ENCODE measurements at regions of chr7 and their contacts with region 1.

Region 1: DNA sequence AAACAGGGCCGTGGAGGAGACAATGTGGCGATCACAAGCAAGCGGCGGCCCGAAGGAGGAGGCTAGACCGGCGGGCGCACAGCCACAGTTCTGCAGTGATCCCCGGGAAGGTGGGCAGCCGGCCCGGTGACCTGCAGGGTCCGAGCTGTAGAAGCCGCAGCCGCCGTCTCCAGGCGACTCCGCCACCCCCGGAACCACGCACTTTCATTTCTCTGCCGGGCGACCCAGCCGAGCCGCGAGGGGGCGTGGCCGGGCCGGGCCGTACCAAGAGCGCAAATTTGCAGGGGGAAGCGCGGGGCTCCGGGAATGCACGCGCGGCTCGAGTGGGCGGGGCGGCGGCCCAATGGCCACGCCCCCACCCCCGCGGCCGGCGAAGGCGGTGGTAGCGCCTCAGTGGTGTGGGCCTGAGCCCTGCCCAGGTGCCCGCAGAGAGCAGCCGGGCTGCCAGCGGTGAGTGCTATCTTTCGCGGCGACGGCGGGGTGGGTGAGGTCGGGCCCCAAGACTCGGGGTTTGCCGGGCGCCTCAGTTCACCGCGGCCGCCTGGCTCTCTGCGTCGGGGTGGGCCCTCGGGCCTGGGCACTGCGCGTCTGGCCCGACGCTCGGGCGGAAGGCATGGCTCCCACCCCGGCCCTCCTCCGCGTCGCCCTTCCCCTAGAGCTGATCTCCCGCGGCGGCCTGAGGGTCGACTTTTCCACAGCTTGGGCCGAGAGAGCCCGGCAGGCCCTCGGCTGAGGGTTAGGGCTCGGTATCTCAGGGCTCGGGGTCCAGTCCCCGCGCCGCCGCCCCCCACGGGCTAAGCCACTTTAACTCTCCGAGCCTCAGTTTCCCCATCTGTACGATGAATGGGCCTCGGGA is at the start of gene POR:
- DNase-seq: peak; percentile 95 to 99 (median 97)
- H3K4me3 ChIP-seq: peak within 1 kb of the TSS; percentile 87
- H3K27ac ChIP-seq: peak within 1 kb of the TSS; percentile 73 to 79
- H3K4me1 ChIP-seq: peaks cover 13% of the 10 kb centered on the region
- H3K27me3 ChIP-seq: no peaks in the 10 kb centered on the region
- CTCF ChIP-seq: peak in 1 of 3 donors; percentile 49
- EP300 ChIP-seq: no peak
- POLR2A ChIP-seq: peak; percentile 94
- total RNA-seq, gene POR: 91.2 to 191 (median 148) TPM

Region 2: GRCh38 chr7:75962607-75963380 is 47.8 kb after region 1 on chr7:
- intact Hi-C with region 1: loop called in 1 of 4 experiments (anchors 5 kb)
- DNase-seq: peak; percentile 64 to 82 (median 73)
- H3K4me3 ChIP-seq: no peak overlapping the region
- H3K27ac ChIP-seq: peak overlapping the region; percentile 43 to 59
- H3K4me1 ChIP-seq: peaks cover 38% of the 10 kb centered on the region
- H3K27me3 ChIP-seq: no peaks in the 10 kb centered on the region
- CTCF ChIP-seq: no peak
- EP300 ChIP-seq: no peak
- POLR2A ChIP-seq: no peak

Region 3: DNA sequence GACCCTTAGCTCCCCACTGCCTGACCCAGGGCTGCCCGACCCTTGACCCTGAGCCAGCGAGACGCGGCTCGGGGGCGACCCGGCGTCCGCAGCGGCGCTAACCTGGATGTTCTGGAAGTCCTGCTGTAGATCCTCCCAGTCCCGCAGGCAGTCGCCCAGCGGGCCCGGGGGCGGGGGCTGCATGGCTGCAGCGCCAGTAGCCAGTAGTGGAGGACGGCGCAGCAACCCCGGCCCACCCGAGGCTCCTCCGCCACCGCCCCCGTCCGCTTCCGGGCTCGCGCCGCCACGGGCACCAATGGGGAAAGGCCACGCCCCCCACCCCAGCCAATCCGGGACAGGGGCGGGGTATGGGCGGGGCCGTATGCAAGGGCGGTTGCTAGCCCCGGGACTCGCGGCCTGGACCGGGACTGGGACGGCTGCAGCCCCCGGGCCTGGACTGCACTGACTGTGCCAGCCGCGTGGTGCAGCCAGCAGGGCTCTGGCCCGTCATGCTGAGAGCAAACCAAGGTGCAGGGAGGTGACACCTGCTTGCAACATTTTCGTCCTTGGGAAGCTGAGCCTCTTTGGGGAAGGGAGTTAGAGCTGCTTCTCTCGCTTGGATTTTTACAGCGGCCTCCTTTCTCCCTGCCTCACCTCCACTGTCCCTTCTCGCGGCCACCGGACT is 79.6 kb after region 1 on chr7 and contains the start of gene TMEM120A:
- intact Hi-C with region 1: loop called in 1 of 4 experiments (anchors 2 kb)
- DNase-seq: peak; percentile 97 to 99 (median 97)
- H3K4me3 ChIP-seq: peak within 1 kb of the TSS; percentile 58
- H3K27ac ChIP-seq: peak within 1 kb of the TSS; percentile 92 to 94
- H3K4me1 ChIP-seq: peaks cover 20% of the 10 kb centered on the region
- H3K27me3 ChIP-seq: no peaks in the 10 kb centered on the region
- CTCF ChIP-seq: peak; percentile 18 to 47 (median 28)
- EP300 ChIP-seq: peak; percentile 27
- POLR2A ChIP-seq: peak; percentile 79
- total RNA-seq, gene TMEM120A: 44.4 to 140 (median 89.5) TPM

Region 4: DNA sequence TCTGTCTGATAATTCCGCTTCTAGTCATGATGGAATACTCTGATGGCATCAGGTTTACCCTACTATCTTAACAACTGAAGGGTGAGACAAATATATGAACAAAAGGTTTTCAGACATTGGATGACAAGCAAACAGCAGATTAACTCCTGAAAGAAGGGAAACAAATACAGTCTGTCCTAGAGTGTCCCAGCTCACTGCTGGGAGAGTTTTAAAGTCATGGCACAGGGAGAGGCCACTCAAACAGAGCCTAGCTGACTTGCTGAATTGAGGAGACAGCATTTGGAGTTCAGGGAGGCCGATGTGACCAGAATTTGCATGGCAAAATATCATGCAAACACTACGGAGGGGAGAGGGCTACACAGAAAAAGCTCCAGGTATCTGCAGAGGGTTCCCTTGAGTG is 206.1 kb after region 1 on chr7:
- intact Hi-C with region 1: no loop called
- DNase-seq: no peak
- H3K4me3 ChIP-seq: no peak overlapping the region
- H3K27ac ChIP-seq: no peak overlapping the region
- H3K4me1 ChIP-seq: no peaks in the 10 kb centered on the region
- H3K27me3 ChIP-seq: no peaks in the 10 kb centered on the region
- CTCF ChIP-seq: no peak
- EP300 ChIP-seq: no peak
- POLR2A ChIP-seq: no peak

Measured in ovary (tissue), 10 donors.